ENCODE measurements at regions of chr17 and their contacts with region 1.

Region 1: GRCh38 chr17:35046740-35047283 is 16.7 kb downstream of the RFFL start:
- DNase-seq: peak; percentile 30

Region 2: DNA sequence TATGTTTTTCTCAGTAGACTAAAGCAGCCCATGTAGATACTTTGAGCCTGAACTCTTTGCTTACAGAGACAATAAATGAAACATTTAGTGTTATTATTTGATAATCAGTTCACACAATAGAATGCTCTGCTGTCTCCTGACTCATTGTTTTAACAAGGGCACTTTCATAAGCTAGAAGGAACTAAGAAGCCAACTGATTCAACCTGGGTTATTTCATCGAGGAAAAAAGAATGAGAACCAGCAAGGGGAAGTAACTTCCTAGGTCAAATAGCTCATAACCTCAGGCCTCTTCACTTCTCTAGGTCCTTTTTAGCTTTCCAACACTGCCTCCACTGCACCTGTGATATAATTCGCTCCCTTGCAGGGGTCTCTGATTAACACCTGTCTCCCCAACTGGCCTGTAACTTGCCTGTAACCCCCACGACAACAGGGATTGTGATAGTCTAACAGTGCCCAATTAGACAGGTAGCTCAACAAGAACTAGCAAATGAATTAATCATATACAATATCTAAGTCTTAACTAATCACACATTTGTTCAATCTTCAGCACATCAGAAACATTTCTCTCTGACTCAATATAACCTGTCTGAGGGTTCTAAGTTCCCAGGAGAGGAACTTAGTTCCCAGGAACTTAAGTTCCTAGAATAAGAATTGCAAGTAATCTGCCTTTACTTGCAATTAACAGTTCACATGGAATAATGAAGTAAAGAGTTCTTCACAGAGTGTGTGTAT is 18.1 kb before region 1 on chr17:
- CTCF ChIA-PET with region 1: no interaction called
- POLR2A ChIA-PET with region 1: no interaction called
- DNase-seq: no peak

Region 3: GRCh38 chr17:35063514-35064223 is 16.9 kb after region 1 on chr17 and contains the start of gene RFFL:
- CTCF ChIA-PET with region 1: no interaction called
- POLR2A ChIA-PET with region 1: interaction called, 11 read pairs
- DNase-seq: peak; percentile 75

Region 4: GRCh38 chr17:35129154-35129972 is 82.6 kb after region 1 on chr17:
- CTCF ChIA-PET with region 1: no interaction called
- POLR2A ChIA-PET with region 1: no interaction called
- DNase-seq: no peak

Measured in HEK293T (cell line).